Right cardiac atrium (tissue), 5 donors: ENCODE measurements at regions of chr6 and their contacts with region 1.

Region 1: GRCh38 chr6:138115877-138116660 is 8.8 kb upstream of the PERP start:
- DNase-seq: peak; percentile 36 to 73 (median 67)
- ATAC-seq: peak; percentile 88
- H3K4me3 ChIP-seq: no peak overlapping the region
- H3K27ac ChIP-seq: no peak overlapping the region
- H3K4me1 ChIP-seq: no peaks in the 10 kb centered on the region
- H3K27me3 ChIP-seq: no peaks in the 10 kb centered on the region

Region 2: DNA sequence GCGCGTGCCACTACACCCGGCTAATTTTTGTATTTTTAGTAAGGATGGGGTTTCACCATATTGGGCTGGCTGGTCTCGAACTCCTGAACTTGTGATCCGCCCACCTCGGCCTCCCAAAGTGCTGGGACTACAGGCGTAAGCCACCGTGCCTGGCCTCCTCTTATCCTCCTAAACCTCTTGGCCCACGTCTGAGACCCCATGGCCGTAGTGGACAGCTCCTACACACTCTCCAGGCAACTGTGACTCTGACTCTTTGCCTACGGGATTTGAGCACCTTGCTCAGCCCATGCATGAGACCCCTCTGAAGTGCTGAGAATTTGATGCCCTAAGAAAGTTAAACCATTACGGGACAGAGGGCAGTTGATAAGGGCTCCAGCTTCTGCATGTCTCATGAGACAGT is 33.8 kb before region 1 on chr6:
- intact Hi-C with region 1: no loop called
- DNase-seq: no peak
- ATAC-seq: no peak
- H3K4me3 ChIP-seq: no peak overlapping the region
- H3K27ac ChIP-seq: no peak overlapping the region
- H3K4me1 ChIP-seq: no peaks in the 10 kb centered on the region
- H3K27me3 ChIP-seq: no peaks in the 10 kb centered on the region

Region 3: DNA sequence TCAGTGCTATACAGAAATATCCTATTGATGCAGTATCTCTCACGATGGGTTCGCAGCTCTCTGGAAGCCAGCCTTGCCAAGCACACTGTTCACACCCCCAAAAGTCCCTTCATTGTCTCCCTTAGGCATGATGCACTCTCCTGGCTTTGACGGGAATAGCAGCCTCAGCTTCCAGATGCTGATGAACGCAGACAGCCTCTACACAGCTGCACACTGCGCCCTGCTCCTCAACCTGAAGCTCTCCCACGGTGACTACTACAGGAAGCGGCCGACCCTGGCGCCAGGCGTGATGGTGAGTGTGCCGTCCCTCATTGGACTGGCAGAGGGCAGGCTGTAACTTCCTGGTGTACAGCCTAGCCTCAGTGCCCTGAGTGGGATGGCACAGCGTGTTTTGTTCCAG is 162.3 kb after region 1 on chr6:
- intact Hi-C with region 1: loop called (anchors 5 to 10 kb)
- DNase-seq: peak in 1 of 3 donors; percentile 46
- ATAC-seq: peak; percentile 70 to 72
- H3K4me3 ChIP-seq: no peak overlapping the region
- H3K27ac ChIP-seq: no peak overlapping the region
- H3K4me1 ChIP-seq: no peaks in the 10 kb centered on the region
- H3K27me3 ChIP-seq: no peaks in the 10 kb centered on the region

Region 4: DNA sequence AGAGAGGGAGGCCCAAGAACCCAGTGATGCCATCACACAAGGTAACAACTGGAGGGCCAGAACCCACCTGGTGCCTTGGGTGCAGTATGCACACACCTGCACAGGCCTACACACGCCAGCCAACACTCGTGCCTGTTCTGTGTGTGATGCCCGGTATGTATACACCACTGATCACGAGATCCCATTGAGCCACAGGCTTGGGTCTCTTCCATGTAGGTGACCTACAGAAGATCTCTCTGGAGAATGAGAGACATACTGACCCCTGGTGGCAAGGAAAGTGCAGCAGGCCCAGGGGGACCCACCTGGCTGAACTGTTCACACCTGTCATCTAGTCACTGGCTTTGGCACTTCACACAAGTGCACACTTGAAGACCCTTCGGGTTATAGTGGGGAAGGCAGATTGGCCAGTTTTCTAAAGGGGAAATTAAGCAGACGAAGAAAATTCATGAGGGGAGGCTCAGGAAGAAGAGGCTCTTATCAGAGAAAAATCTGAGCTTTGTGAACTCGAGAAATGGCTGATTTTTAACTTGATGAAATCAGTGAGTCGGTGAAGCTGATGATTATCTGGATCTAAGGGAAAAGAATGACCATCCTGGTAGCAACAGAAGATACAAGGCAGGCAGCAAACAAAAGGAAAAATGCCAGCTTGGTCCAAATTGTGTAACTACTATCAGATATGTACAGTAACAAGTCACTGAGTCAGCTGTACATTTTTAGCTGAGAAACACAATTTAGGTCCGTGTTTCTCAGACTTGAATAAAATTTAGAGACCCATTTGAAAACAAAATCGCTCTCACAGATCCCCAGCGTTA is 171.3 kb after region 1 on chr6:
- intact Hi-C with region 1: loop called in 1 of 4 experiments (anchors 5 kb)
- DNase-seq: no peak
- ATAC-seq: peak; percentile 34 to 48
- H3K4me3 ChIP-seq: no peak overlapping the region
- H3K27ac ChIP-seq: no peak overlapping the region
- H3K4me1 ChIP-seq: no peaks in the 10 kb centered on the region
- H3K27me3 ChIP-seq: no peaks in the 10 kb centered on the region

Region 5: GRCh38 chr6:138404662-138405337 is 288.7 kb after region 1 on chr6:
- intact Hi-C with region 1: loop called in 1 of 4 experiments (anchors 5 kb)
- DNase-seq: peak in 2 of 3 donors; percentile 68 to 72
- ATAC-seq: peak; percentile 17 to 20
- H3K4me3 ChIP-seq: peak overlapping the region; percentile 79
- H3K27ac ChIP-seq: peak overlapping the region; percentile 94
- H3K4me1 ChIP-seq: no peaks in the 10 kb centered on the region
- H3K27me3 ChIP-seq: no peaks in the 10 kb centered on the region

Region 6: GRCh38 chr6:138517635-138518034 is 401.6 kb after region 1 on chr6:
- intact Hi-C with region 1: loop called in 2 of 4 experiments (anchors 10 kb)
- DNase-seq: peak in 2 of 3 donors; percentile 47 to 58
- ATAC-seq: peak; percentile 51 to 60
- H3K4me3 ChIP-seq: no peak overlapping the region
- H3K27ac ChIP-seq: no peak overlapping the region
- H3K4me1 ChIP-seq: peaks cover 4% of the 10 kb centered on the region
- H3K27me3 ChIP-seq: no peaks in the 10 kb centered on the region

Region 7: GRCh38 chr6:138588805-138589434 is 472.9 kb after region 1 on chr6:
- intact Hi-C with region 1: loop called in 2 of 4 experiments (anchors 5 kb)
- DNase-seq: peak in 2 of 3 donors; percentile 47 to 77
- ATAC-seq: peak; percentile 53 to 56
- H3K4me3 ChIP-seq: no peak overlapping the region
- H3K27ac ChIP-seq: no peak overlapping the region
- H3K4me1 ChIP-seq: no peaks in the 10 kb centered on the region
- H3K27me3 ChIP-seq: no peaks in the 10 kb centered on the region

Region 8: DNA sequence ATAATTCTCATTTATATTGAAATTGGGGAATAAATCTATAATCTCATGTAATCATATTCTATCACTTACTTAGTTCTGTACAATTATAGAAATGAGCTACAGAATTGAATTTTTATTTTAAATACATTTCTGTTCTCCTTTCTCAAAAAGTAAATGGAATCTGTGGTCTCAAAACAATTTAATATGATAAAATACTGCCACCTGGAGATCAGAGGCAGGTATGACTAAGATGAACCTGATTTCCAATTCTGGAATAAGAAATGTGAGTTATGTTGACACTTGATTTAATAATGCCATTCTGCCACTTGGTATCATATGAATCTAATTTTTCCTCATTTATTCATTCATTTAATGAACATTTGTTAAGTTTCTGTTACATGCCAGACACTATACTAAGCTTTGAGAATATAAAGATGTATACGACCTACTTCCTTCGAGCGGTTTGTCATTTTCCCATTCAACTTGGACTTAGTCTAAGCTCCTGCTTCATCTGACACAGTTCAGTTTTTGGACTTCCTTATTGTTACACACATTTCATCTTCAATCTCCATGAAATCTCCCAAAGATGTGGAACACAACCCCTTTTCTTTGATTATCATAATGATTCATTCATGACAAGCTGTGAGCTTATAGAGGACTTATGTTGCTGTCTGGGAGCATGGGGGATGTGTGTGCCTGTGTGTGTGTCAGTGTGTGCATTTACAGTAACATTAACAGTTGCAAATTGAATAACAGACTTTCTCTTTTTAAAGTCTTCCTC is 650.0 kb after region 1 on chr6:
- intact Hi-C with region 1: loop called in 3 of 4 experiments (anchors 5 to 10 kb)
- DNase-seq: no peak
- ATAC-seq: no peak
- H3K4me3 ChIP-seq: no peak overlapping the region
- H3K27ac ChIP-seq: no peak overlapping the region
- H3K4me1 ChIP-seq: no peaks in the 10 kb centered on the region
- H3K27me3 ChIP-seq: no peaks in the 10 kb centered on the region